Activated CD4-positive, alpha-beta memory T cell treated with anti-CD3 and anti-CD28 coated beads, Interleukin-2, amount 10 ng/mL, durations not matched to agents 7 days and 5 days (primary cell): ENCODE measurements at regions of chr10 and their contacts with region 1.

Region 1: DNA sequence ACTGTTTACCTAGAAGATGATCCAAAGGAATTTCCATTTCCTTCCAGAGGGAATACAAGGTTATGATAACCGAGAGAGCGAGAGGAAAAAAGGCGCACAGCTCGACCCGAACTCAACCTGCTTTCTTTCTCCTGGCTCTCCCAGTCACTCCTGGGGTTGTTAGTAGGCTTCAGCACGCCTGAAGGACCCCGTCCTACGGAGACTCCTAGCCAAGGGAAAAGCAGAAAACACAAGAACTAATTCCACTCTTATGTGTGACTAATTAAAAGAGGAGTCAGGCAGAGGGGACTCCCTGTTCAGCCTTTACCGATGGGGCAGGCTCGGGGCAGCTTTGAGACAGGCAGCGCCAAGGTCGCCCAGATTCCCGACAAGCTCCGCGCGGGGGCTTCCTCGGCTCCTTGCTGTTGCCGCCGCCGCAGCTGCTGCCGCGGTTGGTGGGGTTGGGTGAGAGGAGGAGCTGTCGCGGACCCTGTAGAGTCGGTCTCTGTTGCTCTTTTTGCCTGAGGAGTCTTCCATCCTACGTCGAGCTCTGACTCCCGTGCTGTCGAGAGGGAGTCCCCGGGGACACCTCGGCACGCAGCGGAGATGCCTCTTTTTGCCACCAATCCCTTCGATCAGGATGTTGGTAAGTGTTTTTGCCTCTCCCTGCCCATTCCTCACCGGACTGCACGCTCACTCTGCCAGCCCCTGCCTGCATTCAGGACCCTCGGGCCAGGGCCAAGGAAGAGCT is at the start of gene STAM:
- DNase-seq: peak; percentile 93
- H3K4me3 Mint-ChIP-seq: peak within 1 kb of the TSS; percentile 100
- H3K27ac Mint-ChIP-seq: peak within 1 kb of the TSS; percentile 98
- H3K4me1 Mint-ChIP-seq: peaks cover 58% of the 10 kb centered on the region
- H3K27me3 Mint-ChIP-seq: no peaks in the 10 kb centered on the region
- total RNA-seq, gene STAM: 39.8 to 39.9 TPM

Region 2: GRCh38 chr10:17228091-17228940 is 415.6 kb before region 1 on chr10 and contains the start of gene VIM:
- CTCF ChIA-PET with region 1: no interaction called
- POLR2A ChIA-PET with region 1: interaction called, 24 read pairs
- DNase-seq: peak; percentile 92
- H3K4me3 Mint-ChIP-seq: peak within 1 kb of the TSS; percentile 89
- H3K27ac Mint-ChIP-seq: peak within 1 kb of the TSS; percentile 95
- H3K4me1 Mint-ChIP-seq: peaks cover 55% of the 10 kb centered on the region
- H3K27me3 Mint-ChIP-seq: no peaks in the 10 kb centered on the region
- total RNA-seq, gene VIM: 2,572 to 2,607 TPM

Region 3: DNA sequence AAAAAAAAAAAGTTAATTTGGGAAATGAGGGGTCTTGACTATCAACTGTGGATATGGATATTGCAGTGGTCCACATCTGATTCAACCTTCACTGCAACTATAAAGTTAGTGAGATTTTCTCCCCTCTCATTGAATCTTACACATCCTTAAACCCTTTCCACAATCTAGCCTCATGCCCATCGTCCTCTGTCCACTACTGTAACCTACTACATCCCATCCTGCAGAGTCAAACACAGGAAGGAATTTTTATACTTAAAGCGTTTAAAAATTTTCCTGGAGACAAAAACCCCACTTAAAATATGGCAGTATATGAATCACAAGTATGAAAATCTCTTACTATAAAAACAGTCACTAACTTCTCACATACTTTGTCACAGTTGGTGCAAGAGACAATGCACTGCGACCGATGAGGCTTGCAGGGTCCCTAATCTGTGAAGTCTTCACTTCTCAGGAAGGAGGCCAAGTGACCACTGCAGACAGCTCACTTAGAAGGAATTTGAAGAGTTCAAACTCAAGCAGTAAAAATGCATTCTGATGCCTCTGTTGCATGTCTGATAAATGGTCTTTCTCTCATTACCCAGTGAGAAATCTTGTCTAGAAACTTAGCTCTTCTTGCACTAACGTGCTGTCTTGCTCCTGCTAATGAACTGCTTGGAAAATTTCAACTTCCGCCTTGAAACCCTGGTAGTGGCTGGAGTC is 139.2 kb before region 1 on chr10:
- CTCF ChIA-PET with region 1: no interaction called
- POLR2A ChIA-PET with region 1: interaction called, 31 read pairs
- DNase-seq: no peak
- H3K4me3 Mint-ChIP-seq: peak overlapping the region; percentile 57
- H3K27ac Mint-ChIP-seq: peak overlapping the region; percentile 91
- H3K4me1 Mint-ChIP-seq: peaks cover 58% of the 10 kb centered on the region
- H3K27me3 Mint-ChIP-seq: no peaks in the 10 kb centered on the region

Region 4: GRCh38 chr10:17633353-17633752 is 10.6 kb before region 1 on chr10:
- CTCF ChIA-PET with region 1: interaction called, 3 read pairs
- POLR2A ChIA-PET with region 1: interaction called, 21 read pairs
- DNase-seq: no peak
- H3K4me3 Mint-ChIP-seq: no peak overlapping the region
- H3K27ac Mint-ChIP-seq: no peak overlapping the region
- H3K4me1 Mint-ChIP-seq: no peaks in the 10 kb centered on the region
- H3K27me3 Mint-ChIP-seq: peaks cover 7% of the 10 kb centered on the region

Region 5: DNA sequence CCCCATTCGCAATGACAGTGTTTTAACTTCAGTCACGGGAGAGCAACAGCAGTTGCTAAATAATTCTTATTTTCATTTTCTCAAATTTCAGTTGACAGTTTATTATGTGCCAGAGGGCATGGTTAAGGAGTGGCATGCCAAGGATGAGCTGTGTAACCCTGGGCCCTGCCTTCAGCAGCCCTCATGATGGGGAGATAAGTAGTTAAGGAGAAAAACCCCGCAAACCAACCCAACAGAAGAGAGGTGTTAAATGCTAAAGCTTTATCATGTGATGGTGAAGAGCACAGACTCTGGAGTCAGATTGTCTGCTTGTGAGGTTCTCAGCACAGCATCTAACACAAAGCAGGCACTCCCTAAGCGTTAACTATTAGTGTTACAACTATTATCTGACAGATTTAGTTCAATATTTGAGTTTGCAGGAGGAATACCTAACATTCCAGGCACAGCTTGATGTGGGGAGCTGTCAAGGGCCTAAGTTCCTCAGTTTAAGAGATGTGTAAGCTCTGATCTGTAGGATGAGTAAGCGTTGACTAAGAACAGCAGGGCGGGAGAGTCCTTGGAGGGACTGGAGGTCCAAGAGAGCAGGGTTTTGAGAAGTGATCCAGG is 29.6 kb after region 1 on chr10:
- CTCF ChIA-PET with region 1: interaction called, 7 read pairs
- POLR2A ChIA-PET with region 1: interaction called, 237 read pairs
- DNase-seq: peak; percentile 62
- H3K4me3 Mint-ChIP-seq: peak overlapping the region; percentile 36
- H3K27ac Mint-ChIP-seq: peak overlapping the region; percentile 94
- H3K4me1 Mint-ChIP-seq: peaks cover 77% of the 10 kb centered on the region
- H3K27me3 Mint-ChIP-seq: no peaks in the 10 kb centered on the region

Region 6: DNA sequence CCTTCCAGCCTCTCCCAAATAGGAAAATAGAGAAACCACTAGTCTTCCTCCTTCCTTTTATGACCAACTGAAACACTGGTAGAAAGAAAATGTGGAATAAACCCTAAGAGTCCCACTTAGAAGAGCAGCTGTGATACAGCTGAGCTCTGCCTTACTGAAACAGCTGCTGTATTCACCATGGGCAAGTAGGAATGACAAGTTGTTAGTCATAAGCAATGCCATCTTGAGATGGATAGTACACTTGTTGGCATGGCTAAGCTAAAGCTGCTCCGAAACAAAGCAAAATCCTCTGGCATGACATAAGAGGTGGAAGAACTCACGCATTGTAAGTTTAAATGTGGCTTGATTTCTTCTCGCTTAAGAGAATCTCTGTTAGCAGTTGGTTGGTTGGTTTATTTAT is 59.8 kb after region 1 on chr10:
- CTCF ChIA-PET with region 1: interaction called, 3 read pairs
- POLR2A ChIA-PET with region 1: interaction called, 15 read pairs
- DNase-seq: no peak
- H3K4me3 Mint-ChIP-seq: no peak overlapping the region
- H3K27ac Mint-ChIP-seq: no peak overlapping the region
- H3K4me1 Mint-ChIP-seq: no peaks in the 10 kb centered on the region
- H3K27me3 Mint-ChIP-seq: no peaks in the 10 kb centered on the region

Region 7: DNA sequence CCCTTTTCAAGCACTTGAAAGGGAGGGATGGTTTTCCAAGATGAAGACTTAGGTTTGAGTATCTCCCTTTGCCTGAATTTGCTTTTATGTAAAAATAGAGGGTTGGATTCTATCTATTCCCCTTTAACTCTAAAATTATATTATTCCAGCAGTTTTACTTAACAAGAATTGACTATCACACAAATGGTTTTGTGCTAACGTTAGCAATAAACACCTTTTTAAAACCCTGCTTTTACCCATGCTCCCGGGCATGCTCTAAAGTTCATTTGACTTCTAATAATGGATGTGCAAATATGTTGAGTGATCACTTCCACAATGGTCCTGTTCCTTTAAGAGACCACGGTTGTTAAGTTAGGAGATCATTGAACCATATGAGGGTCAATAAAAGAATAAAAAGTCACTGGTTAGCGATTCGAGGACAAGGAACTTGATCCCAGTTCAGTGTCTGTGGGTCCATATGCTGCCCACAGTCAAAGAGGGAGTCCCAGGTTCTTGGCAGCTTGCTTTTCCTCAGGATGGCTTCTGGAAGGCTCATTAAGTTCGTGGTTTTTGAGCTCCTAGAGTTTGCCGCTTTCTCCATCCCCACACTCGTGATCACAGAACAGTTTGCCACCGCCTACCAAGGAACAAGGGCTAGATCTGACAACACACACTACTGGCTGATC is 108.0 kb after region 1 on chr10 and contains the start of gene TMEM236:
- CTCF ChIA-PET with region 1: no interaction called
- POLR2A ChIA-PET with region 1: no interaction called
- DNase-seq: no peak
- H3K4me3 Mint-ChIP-seq: no peak within 1 kb of the TSS
- H3K27ac Mint-ChIP-seq: no peak within 1 kb of the TSS
- H3K4me1 Mint-ChIP-seq: peaks cover 8% of the 10 kb centered on the region
- H3K27me3 Mint-ChIP-seq: no peaks in the 10 kb centered on the region
- total RNA-seq, gene TMEM236: 0.08 to 0.15 TPM

Region 8: GRCh38 chr10:18021725-18022480 is 378.0 kb after region 1 on chr10:
- CTCF ChIA-PET with region 1: no interaction called
- POLR2A ChIA-PET with region 1: no interaction called
- DNase-seq: no peak
- H3K4me3 Mint-ChIP-seq: no peak overlapping the region
- H3K27ac Mint-ChIP-seq: no peak overlapping the region
- H3K4me1 Mint-ChIP-seq: no peaks in the 10 kb centered on the region
- H3K27me3 Mint-ChIP-seq: no peaks in the 10 kb centered on the region